ENCODE measurements at regions of chr12 and their contacts with region 1.

Region 1: DNA sequence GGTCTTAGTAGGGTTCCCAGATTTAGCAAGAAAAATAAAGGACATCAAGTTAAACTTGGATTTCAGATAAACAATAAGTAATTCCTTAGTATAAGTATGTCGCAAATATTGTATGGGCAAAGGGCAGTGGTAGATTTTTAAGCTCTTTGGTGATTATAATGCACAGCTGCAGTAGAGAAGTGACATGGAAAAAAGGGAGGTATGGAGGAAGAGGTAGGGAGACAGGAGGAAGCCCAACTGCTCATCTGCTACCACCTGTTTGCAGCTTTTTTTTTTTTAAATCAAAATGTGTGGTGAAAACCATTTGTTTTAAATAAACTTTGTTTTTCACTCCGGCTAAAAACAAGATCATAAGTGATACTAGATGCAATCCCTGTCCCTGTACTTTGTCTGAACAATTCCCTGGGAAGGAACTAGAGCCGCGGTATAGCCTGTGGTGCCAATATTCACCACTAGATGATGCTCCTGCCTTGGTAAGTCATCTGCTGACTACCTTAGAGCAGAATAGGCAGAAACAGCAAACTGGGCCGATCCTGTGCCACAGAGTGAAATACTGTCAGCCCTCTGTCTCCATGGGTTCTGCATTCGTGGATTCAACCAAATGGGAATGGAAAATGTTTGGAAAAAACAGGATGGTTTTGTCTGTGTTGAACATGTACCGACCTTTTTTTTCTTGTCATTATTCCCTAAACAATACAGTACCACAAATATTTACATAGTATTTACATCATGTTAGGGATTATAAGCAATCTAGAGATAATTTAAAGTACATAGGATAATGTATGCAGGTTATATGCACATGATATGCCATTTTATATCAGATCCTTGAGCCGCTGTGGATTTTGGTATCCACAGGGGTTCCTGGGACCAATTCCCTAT is 62.4 kb upstream of the PLBD1 start:
- DNase-seq: peak; percentile 76
- ATAC-seq: peak; percentile 99
- H3K4me3 ChIP-seq: no peak overlapping the region
- H3K27ac ChIP-seq: no peak overlapping the region
- H3K4me1 ChIP-seq: no peaks in the 10 kb centered on the region
- H3K27me3 ChIP-seq: no peaks in the 10 kb centered on the region
- CTCF ChIP-seq: peak; percentile 84

Region 2: GRCh38 chr12:14664510-14664909 is 34.4 kb after region 1 on chr12:
- CTCF ChIA-PET with region 1: no interaction called
- POLR2A ChIA-PET with region 1: no interaction called
- intact Hi-C with region 1: loop called (anchors 1 kb)
- DNase-seq: peak; percentile 66
- ATAC-seq: 0 out of 2 replicates have a peak, but pooled peaks have one; percentile 35
- H3K4me3 ChIP-seq: no peak overlapping the region
- H3K27ac ChIP-seq: no peak overlapping the region
- H3K4me1 ChIP-seq: no peaks in the 10 kb centered on the region
- H3K27me3 ChIP-seq: peaks cover 4% of the 10 kb centered on the region; the same call in 1 of the 2 replicates
- CTCF ChIP-seq: peak; percentile 60; the same call in 1 of the 2 replicates

Region 3: GRCh38 chr12:14716848-14717444 is 86.9 kb after region 1 on chr12:
- CTCF ChIA-PET with region 1: no interaction called
- POLR2A ChIA-PET with region 1: no interaction called
- intact Hi-C with region 1: loop called (anchors 1 kb)
- DNase-seq: peak; percentile 56
- ATAC-seq: peak; percentile 46
- H3K4me3 ChIP-seq: no peak overlapping the region
- H3K27ac ChIP-seq: no peak overlapping the region
- H3K4me1 ChIP-seq: no peaks in the 10 kb centered on the region
- H3K27me3 ChIP-seq: no peaks in the 10 kb centered on the region
- CTCF ChIP-seq: peak; percentile 59